Ovary (tissue), 10 donors: ENCODE measurements at regions of chrX and their contacts with region 1.

Region 1: GRCh38 chrX:40146262-40147125 is 48.7 kb upstream of the BCOR start:
- DNase-seq: peak; percentile 51 to 62 (median 54)
- H3K4me3 ChIP-seq: peak overlapping the region; percentile 39
- H3K27ac ChIP-seq: no peak overlapping the region
- H3K4me1 ChIP-seq: peaks cover 6% of the 10 kb centered on the region
- H3K27me3 ChIP-seq: no peaks in the 10 kb centered on the region
- CTCF ChIP-seq: no peak
- EP300 ChIP-seq: no peak
- POLR2A ChIP-seq: no peak

Region 2: DNA sequence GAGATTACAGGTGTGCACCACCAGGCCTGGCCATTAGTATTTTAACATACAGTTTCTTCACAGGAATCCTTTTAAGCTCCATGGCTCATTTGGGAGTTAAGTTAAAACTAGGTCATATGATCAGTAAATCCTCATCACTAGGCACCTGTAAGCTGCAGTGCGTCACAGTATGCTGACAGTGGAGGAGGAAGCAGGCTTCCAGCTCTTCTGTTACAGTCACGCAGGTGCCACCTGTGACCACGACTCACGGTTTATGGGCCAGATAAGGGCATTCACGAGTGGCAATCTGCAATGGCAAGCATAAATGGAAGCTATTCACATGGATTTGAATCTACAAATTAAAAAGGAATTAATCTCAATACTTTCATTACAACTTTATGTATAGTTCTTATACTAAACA is 80.6 kb after region 1 on chrX:
- intact Hi-C with region 1: no loop called
- DNase-seq: no peak
- H3K4me3 ChIP-seq: no peak overlapping the region
- H3K27ac ChIP-seq: no peak overlapping the region
- H3K4me1 ChIP-seq: no peaks in the 10 kb centered on the region
- H3K27me3 ChIP-seq: no peaks in the 10 kb centered on the region
- CTCF ChIP-seq: no peak
- EP300 ChIP-seq: no peak
- POLR2A ChIP-seq: no peak

Region 3: DNA sequence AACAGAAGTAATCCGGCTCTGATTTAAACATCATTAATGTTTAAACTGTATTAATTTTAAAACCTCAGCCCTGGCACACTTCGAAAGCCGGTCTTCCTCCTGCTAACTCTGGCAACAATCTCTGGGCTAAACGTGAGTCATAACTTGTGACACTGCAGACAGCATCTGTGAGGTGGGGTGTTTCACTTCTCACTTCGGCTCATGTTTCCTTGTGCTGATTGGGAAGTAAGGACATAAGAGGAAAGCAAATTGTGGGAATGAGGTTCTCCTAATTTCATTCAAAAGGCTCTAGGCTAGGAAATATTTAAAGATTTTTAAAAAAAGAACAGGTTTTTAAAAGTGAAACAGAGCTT is 798.8 kb after region 1 on chrX:
- intact Hi-C with region 1: loop called in 1 of 4 experiments (anchors 5 kb)
- DNase-seq: peak in 2 of 5 donors; percentile 28 to 47
- H3K4me3 ChIP-seq: no peak overlapping the region
- H3K27ac ChIP-seq: no peak overlapping the region
- H3K4me1 ChIP-seq: no peaks in the 10 kb centered on the region
- H3K27me3 ChIP-seq: no peaks in the 10 kb centered on the region
- CTCF ChIP-seq: no peak
- EP300 ChIP-seq: no peak
- POLR2A ChIP-seq: no peak

Region 4: GRCh38 chrX:42107495-42108488 is 1961.3 kb after region 1 on chrX:
- intact Hi-C with region 1: no loop called
- DNase-seq: no peak
- H3K4me3 ChIP-seq: no peak overlapping the region
- H3K27ac ChIP-seq: no peak overlapping the region
- H3K4me1 ChIP-seq: no peaks in the 10 kb centered on the region
- H3K27me3 ChIP-seq: no peaks in the 10 kb centered on the region
- CTCF ChIP-seq: no peak
- EP300 ChIP-seq: no peak
- POLR2A ChIP-seq: no peak